H1 (cell line): ENCODE measurements at regions of chr13 and their contacts with region 1.

Region 1: GRCh38 chr13:32415019-32415418 is 12.9 kb downstream of the N4BP2L1 start:
- DNase-seq: no peak
- H3K4me3 ChIP-seq: no peak overlapping the region
- H3K27ac ChIP-seq: no peak overlapping the region
- H3K4me1 ChIP-seq: no peaks in the 10 kb centered on the region; a peak in 1 of 7 replicates
- H3K27me3 ChIP-seq: no peaks in the 10 kb centered on the region; a peak in 1 of 7 replicates
- CTCF ChIP-seq: peak; percentile 68 to 74 (median 71)
- EP300 ChIP-seq: no peak
- POLR2A ChIP-seq: no peak
- RAD21 ChIP-seq: peak; percentile 54 to 64

Region 2: GRCh38 chr13:32381539-32381938 is 33.5 kb before region 1 on chr13:
- CTCF ChIA-PET with region 1: interaction called, 12 read pairs
- POLR2A ChIA-PET with region 1: interaction called, 3 read pairs
- DNase-seq: peak in 1 of 2 experiments; percentile 3
- H3K4me3 ChIP-seq: no peak overlapping the region
- H3K27ac ChIP-seq: no peak overlapping the region
- H3K4me1 ChIP-seq: no peaks in the 10 kb centered on the region
- H3K27me3 ChIP-seq: no peaks in the 10 kb centered on the region
- CTCF ChIP-seq: peak in 2 of 3 experiments; percentile 58 to 68; a peak in 3 of 4 replicates
- EP300 ChIP-seq: no peak
- POLR2A ChIP-seq: no peak
- RAD21 ChIP-seq: peak; percentile 79 to 84

Region 3: DNA sequence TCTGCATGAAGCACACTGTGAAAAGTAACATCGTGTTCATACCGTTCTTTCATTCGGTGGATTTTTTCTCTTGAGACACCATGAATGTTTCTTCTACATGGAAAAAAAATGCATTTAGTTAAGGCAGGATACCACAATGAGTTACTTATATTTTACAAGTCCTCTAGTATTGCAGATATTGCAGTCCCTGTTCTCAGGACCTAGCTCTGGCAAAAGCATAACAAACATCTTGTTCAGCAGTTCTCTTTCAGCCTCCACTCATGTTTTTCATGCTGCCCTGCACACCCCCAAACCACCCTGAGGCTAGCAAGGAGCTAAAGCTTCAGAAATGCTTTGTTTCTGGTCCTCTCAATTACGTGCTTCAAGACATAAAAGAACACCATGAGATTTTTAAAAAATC is 11.9 kb before region 1 on chr13:
- CTCF ChIA-PET with region 1: interaction called, 14 read pairs
- POLR2A ChIA-PET with region 1: no interaction called
- DNase-seq: no peak
- H3K4me3 ChIP-seq: no peak overlapping the region
- H3K27ac ChIP-seq: no peak overlapping the region
- H3K4me1 ChIP-seq: no peaks in the 10 kb centered on the region; a peak in 1 of 7 replicates
- H3K27me3 ChIP-seq: no peaks in the 10 kb centered on the region
- CTCF ChIP-seq: no peak
- EP300 ChIP-seq: no peak
- POLR2A ChIP-seq: no peak
- RAD21 ChIP-seq: no peak

Region 4: DNA sequence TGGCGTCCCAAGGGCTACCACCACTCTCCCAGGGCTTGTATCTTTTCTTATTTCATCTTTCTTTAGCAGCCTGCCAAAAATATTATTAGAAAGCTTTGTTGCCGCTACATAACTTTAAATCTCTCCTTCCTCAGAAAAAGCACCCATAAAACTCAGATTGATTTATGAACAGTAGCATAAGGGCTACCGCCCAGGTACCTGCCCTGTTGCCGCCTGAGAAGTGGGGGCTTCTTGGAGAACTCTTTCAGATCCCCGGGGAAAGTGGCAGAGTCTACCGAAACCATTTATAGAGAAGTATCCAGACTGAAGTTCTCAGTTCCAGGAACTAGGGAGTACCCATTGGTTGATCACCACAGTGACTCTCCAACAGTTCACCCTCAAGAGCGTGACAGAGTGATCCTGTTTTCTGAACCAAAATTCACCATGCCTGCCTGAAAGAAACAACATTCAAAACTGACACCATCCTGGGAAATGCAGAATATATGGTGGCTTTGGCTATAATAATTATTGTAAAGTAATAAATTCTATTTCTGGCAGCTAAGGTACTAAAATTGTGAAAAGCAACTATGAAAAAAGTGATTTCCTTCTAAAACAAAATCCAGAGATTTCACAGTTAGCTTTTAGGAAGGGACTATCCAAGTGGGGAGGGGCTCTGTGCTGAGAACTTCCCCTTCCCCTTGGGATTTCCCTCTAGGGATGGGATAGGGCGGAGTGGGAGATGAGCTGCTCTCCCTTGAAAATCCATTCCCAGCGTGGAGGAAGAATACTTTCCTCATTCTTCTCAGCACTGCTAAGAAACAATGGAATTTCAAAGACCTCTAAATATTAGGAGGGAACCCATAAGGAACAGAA is 13.8 kb after region 1 on chr13:
- CTCF ChIA-PET with region 1: interaction called, 10 read pairs
- POLR2A ChIA-PET with region 1: interaction called, 15 read pairs
- DNase-seq: no peak
- H3K4me3 ChIP-seq: peak overlapping the region; percentile 61 to 84 (median 83); a peak in 6 of 8 replicates
- H3K27ac ChIP-seq: no peak overlapping the region
- H3K4me1 ChIP-seq: peaks cover 4% of the 10 kb centered on the region in 4 experiments; a peak in 5 of 7 replicates
- H3K27me3 ChIP-seq: peaks cover 0 to 10% (median 6%) of the 10 kb centered on the region in 4 experiments; a peak in 5 of 7 replicates
- CTCF ChIP-seq: no peak
- EP300 ChIP-seq: no peak
- POLR2A ChIP-seq: no peak
- RAD21 ChIP-seq: no peak